Vagina (tissue), 2 donors: ENCODE measurements at regions of chr1 and their contacts with region 1.

Region 1: GRCh38 chr1:232748910-232749368 is 56.3 kb upstream of the MAP10 start:
- DNase-seq: no peak
- H3K4me3 ChIP-seq: no peak overlapping the region
- H3K27ac ChIP-seq: no peak overlapping the region
- H3K4me1 ChIP-seq: no peaks in the 10 kb centered on the region
- H3K27me3 ChIP-seq: no peaks in the 10 kb centered on the region
- CTCF ChIP-seq: no peak
- POLR2A ChIP-seq: no peak

Region 2: DNA sequence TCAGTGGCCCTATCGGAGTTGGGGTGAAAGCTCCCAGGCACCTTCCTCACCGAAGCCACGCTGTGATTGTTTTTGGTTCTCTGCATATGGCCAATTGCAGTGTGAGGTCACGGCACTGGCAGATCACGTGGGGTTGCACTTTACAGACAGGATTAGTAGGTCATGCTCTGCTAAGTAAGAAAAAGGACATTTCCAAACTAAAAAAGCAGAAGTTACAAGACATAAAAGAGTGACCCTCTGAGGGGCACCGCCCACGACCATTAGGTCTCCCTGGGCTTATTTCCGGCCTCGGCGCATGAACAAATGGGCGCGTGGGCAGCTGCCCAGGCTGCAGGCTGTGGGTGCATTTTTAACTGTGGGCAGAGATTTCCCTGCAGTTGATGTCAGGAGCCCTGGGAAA is 1999.8 kb before region 1 on chr1:
- intact Hi-C with region 1: loop called (anchors 5 kb)
- DNase-seq: no peak
- H3K4me3 ChIP-seq: no peak overlapping the region
- H3K27ac ChIP-seq: no peak overlapping the region
- H3K4me1 ChIP-seq: no peaks in the 10 kb centered on the region
- H3K27me3 ChIP-seq: no peaks in the 10 kb centered on the region
- CTCF ChIP-seq: no peak
- POLR2A ChIP-seq: no peak

Region 3: DNA sequence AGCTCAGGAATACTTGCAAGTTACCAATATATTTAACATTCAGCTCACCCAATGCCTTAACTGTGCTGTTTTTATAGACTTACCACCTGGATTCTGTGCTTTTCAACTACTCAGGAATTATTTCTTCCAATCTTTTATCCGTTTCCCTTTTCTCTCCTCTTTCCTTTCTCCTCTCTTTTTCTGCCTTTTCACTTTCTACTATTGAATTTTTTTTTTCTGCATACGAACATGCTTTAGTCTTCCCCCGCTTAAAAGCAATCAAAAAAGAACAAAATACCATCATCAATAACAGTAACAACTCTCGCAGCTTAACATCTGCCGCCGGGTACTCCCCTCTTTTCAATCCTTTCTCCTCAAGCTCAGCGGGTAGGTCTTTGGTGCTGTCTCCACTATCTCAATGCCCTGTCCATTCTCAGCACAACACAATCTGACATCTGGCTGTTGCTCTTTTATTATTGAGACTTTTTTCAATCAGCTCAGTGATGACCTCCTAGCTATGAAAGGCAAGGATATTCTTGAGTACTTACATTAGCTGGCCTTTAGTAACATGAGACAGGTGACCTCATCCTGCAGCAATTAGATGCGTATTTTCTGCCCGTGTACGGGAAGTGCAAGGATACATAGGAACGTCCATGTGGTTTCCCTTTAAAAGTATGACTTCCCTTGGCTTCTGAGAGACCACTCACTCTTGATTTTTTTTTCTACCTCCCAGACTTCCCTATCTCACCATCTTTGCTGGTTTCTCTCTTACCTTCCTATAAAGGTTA is 78.8 kb before region 1 on chr1:
- intact Hi-C with region 1: no loop called
- DNase-seq: no peak
- H3K4me3 ChIP-seq: no peak overlapping the region
- H3K27ac ChIP-seq: no peak overlapping the region
- H3K4me1 ChIP-seq: peaks cover 10% of the 10 kb centered on the region
- H3K27me3 ChIP-seq: no peaks in the 10 kb centered on the region
- CTCF ChIP-seq: no peak
- POLR2A ChIP-seq: no peak